Heart right ventricle (tissue), 16 donors: ENCODE measurements at regions of chr2 and their contacts with region 1.

Region 1: GRCh38 chr2:177332041-177332991 is 60.3 kb upstream of the AGPS start:
- DNase-seq: peak; percentile 19 to 58
- ATAC-seq: peak; percentile 67 to 89 (median 84)
- H3K4me3 ChIP-seq: peak overlapping the region in 4 of 10 donors; percentile 4 to 21 (median 11)
- H3K27ac ChIP-seq: peak overlapping the region in 5 of 10 donors; percentile 5 to 43 (median 13)
- H3K4me1 ChIP-seq: peaks cover 0 to 20% (median 0%) of the 10 kb centered on the region in 9 donors
- H3K27me3 ChIP-seq: no peaks in the 10 kb centered on the region
- CTCF ChIP-seq: peak in 8 of 9 donors; percentile 60 to 76 (median 70)

Region 2: GRCh38 chr2:177212106-177212890 is 120.0 kb before region 1 on chr2 and contains the start of gene HNRNPA3:
- intact Hi-C with region 1: loop called in 1 of 10 experiments (anchors 5 kb)
- DNase-seq: peak; percentile 99 to 100
- ATAC-seq: peak; percentile 95 to 97 (median 96)
- H3K4me3 ChIP-seq: peak within 1 kb of the TSS; percentile 69 to 96 (median 86)
- H3K27ac ChIP-seq: peak within 1 kb of the TSS; percentile 93 to 100 (median 99)
- H3K4me1 ChIP-seq: peaks cover 8 to 53% (median 48%) of the 10 kb centered on the region in 9 donors
- H3K27me3 ChIP-seq: no peaks in the 10 kb centered on the region
- CTCF ChIP-seq: peak in 7 of 9 donors; percentile 16 to 60 (median 29)
- total RNA-seq, gene HNRNPA3: 63.7 to 93.8 (median 77.6) TPM

Region 3: GRCh38 chr2:177296040-177296439 is 36.3 kb before region 1 on chr2:
- intact Hi-C with region 1: loop called in 2 of 10 experiments (anchors 5 kb)
- DNase-seq: no peak
- ATAC-seq: peak in 5 of 8 donors; percentile 38 to 74 (median 54)
- H3K4me3 ChIP-seq: peak overlapping the region in 1 of 10 donors; percentile 12
- H3K27ac ChIP-seq: peak overlapping the region in 6 of 10 donors; percentile 5 to 63 (median 52)
- H3K4me1 ChIP-seq: peaks cover 0 to 14% (median 8%) of the 10 kb centered on the region in 9 donors
- H3K27me3 ChIP-seq: no peaks in the 10 kb centered on the region
- CTCF ChIP-seq: peak in 8 of 9 donors; percentile 11 to 63 (median 52)

Region 4: DNA sequence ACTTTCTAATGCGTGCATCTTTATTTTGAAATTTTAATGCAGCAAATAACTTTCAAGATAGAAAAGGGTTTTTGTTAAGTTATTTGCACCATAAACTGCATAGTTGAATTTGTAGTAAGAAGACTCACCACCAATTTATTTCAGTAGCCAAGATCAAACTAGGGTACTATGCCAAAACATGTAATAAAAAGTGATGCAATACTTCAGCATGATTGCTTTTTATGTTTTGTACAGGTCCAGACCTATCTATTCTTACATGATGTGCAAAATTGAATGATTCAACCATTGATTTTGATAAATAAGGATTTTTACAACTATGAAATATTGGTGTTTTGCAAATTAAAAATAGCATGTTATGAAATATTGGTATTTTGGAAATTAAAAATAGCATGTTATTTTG is 87.0 kb after region 1 on chr2:
- intact Hi-C with region 1: loop called (anchors 1 to 5 kb)
- DNase-seq: no peak
- ATAC-seq: no peak
- H3K4me3 ChIP-seq: no peak overlapping the region
- H3K27ac ChIP-seq: no peak overlapping the region
- H3K4me1 ChIP-seq: peaks cover 0 to 36% (median 18%) of the 10 kb centered on the region in 9 donors
- H3K27me3 ChIP-seq: no peaks in the 10 kb centered on the region
- CTCF ChIP-seq: no peak

Region 5: GRCh38 chr2:177604271-177605065 is 272.2 kb after region 1 on chr2:
- intact Hi-C with region 1: loop called in 5 of 10 experiments (anchors 2 to 10 kb)
- DNase-seq: peak in 1 of 2 donors; percentile 25
- ATAC-seq: peak in 7 of 8 donors; percentile 44 to 73 (median 66)
- H3K4me3 ChIP-seq: no peak overlapping the region
- H3K27ac ChIP-seq: peak overlapping the region in 2 of 10 donors; percentile 6 to 36
- H3K4me1 ChIP-seq: peaks cover 0 to 13% (median 3%) of the 10 kb centered on the region in 9 donors
- H3K27me3 ChIP-seq: no peaks in the 10 kb centered on the region
- CTCF ChIP-seq: peak; percentile 37 to 83 (median 67)

Region 6: GRCh38 chr2:177763532-177764265 is 431.4 kb after region 1 on chr2:
- intact Hi-C with region 1: loop called in 8 of 10 experiments (anchors 1 to 10 kb)
- DNase-seq: peak; percentile 60 to 74
- ATAC-seq: peak; percentile 80 to 91 (median 84)
- H3K4me3 ChIP-seq: peak overlapping the region in 1 of 10 donors; percentile 20
- H3K27ac ChIP-seq: no peak overlapping the region
- H3K4me1 ChIP-seq: peaks cover 0 to 11% (median 6%) of the 10 kb centered on the region in 9 donors
- H3K27me3 ChIP-seq: no peaks in the 10 kb centered on the region
- CTCF ChIP-seq: peak; percentile 77 to 92 (median 85)